Tibial artery (tissue), 4 donors: ENCODE measurements at regions of chr7 and their contacts with region 1.

Region 1: DNA sequence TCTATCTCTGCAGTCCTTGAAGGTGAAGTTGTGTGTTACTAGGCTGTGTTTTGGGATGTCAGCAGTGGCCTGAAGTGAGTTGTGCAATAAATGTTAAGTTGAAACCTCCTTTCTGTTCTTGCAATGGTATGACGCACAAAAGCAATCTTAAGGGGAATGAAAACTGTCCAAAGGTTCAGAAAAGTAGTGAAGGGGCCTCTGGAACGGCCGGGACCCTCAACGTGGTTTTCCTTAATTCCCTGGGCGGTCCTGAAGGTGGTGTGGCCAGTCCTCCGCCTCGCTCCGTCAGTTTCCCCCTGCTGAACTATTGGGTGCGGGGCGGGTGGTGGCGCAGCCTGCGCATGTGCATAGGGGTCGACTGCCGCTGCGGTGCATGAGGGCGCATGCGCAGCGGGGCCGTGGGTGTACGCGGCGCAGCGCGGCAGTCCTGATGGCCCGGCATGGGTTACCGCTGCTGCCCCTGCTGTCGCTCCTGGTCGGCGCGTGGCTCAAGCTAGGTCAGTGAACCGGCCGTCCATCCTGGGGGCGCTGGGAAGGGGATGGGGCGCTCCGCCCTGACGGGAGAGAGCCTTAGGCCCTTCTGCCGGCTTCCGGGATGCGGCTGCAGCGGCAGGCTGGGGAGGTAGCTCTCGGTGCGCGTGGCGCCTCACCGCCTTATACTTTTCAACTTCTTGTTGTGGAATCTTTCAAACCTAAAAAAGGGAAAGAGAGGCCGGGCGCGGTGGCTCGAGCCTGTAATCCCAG is at the start of gene SUMF2:
- DNase-seq: peak; percentile 89 to 96
- H3K4me3 ChIP-seq: peak within 1 kb of the TSS; percentile 77 to 95
- H3K27ac ChIP-seq: peak within 1 kb of the TSS; percentile 91
- H3K4me1 ChIP-seq: peaks cover 0 to 18% (median 2%) of the 10 kb centered on the region in 4 donors
- H3K27me3 ChIP-seq: no peaks in the 10 kb centered on the region
- CTCF ChIP-seq: peak in 1 of 2 experiments; percentile 21

Region 2: GRCh38 chr7:56051339-56052191 is 12.5 kb before region 1 on chr7 and contains the starts of genes CCT6A and PSPH:
- intact Hi-C with region 1: loop called (anchors 2 kb)
- DNase-seq: peak; percentile 97 to 99
- H3K4me3 ChIP-seq: peak within 1 kb of the TSS; percentile 81 to 87
- H3K27ac ChIP-seq: peak within 1 kb of the TSS; percentile 81 to 85
- H3K4me1 ChIP-seq: peaks cover 0 to 29% (median 14%) of the 10 kb centered on the region in 4 donors
- H3K27me3 ChIP-seq: no peaks in the 10 kb centered on the region
- CTCF ChIP-seq: no peak